ENCODE measurements at regions of chr12 and their contacts with region 1.

Region 1: GRCh38 chr12:124940549-124941527 is 26.4 kb upstream of the UBC start:
- DNase-seq: peak; percentile 62
- ATAC-seq: peak; percentile 60
- H3K4me3 Mint-ChIP-seq: no peak overlapping the region
- H3K27ac Mint-ChIP-seq: no peak overlapping the region
- H3K4me1 Mint-ChIP-seq: peaks cover 15% of the 10 kb centered on the region
- H3K27me3 Mint-ChIP-seq: no peaks in the 10 kb centered on the region
- CTCF ChIP-seq: no peak

Region 2: DNA sequence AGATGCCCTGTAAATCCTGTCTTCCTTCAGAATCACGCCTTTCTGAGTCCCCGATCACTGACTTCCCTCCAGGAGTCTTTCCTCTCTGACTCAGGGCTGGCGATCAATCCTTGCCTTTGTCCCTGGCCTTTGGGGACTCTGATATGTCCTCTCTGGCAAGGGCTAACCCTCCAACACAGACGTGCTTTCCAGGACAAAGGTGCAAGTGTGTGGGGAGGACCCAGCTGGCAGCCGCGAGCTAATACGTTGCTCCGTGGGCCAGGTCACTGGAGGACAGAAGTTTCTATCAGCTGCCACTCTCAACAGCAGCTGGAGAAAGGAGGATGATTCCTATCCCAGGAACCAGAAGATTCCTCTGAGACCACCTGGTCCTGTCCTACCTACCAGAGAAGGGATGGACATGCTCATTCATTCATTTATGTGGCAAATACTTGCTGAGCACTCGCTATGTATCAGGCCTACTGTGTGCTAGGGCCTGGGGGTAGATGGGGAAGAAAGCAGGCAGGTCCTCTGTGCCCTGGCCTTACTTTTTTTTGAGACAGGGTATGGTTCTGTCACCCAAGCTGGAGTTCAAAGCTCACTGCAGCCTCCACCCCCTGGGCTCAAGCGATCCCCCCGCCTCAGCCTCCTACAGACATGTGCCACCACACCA is 68.6 kb before region 1 on chr12:
- CTCF ChIA-PET with region 1: no interaction called
- POLR2A ChIA-PET with region 1: no interaction called
- intact Hi-C with region 1: no loop called
- DNase-seq: no peak
- ATAC-seq: no peak
- H3K4me3 Mint-ChIP-seq: no peak overlapping the region
- H3K27ac Mint-ChIP-seq: no peak overlapping the region
- H3K4me1 Mint-ChIP-seq: peaks cover 21% of the 10 kb centered on the region
- H3K27me3 Mint-ChIP-seq: no peaks in the 10 kb centered on the region
- CTCF ChIP-seq: no peak

Region 3: GRCh38 chr12:124884587-124885438 is 56.0 kb before region 1 on chr12:
- CTCF ChIA-PET with region 1: no interaction called
- POLR2A ChIA-PET with region 1: no interaction called
- intact Hi-C with region 1: no loop called
- DNase-seq: peak; percentile 60
- ATAC-seq: peak; percentile 95
- H3K4me3 Mint-ChIP-seq: peak overlapping the region; percentile 70
- H3K27ac Mint-ChIP-seq: peak overlapping the region; percentile 87
- H3K4me1 Mint-ChIP-seq: peaks cover 65% of the 10 kb centered on the region
- H3K27me3 Mint-ChIP-seq: no peaks in the 10 kb centered on the region
- CTCF ChIP-seq: no peak

Region 4: DNA sequence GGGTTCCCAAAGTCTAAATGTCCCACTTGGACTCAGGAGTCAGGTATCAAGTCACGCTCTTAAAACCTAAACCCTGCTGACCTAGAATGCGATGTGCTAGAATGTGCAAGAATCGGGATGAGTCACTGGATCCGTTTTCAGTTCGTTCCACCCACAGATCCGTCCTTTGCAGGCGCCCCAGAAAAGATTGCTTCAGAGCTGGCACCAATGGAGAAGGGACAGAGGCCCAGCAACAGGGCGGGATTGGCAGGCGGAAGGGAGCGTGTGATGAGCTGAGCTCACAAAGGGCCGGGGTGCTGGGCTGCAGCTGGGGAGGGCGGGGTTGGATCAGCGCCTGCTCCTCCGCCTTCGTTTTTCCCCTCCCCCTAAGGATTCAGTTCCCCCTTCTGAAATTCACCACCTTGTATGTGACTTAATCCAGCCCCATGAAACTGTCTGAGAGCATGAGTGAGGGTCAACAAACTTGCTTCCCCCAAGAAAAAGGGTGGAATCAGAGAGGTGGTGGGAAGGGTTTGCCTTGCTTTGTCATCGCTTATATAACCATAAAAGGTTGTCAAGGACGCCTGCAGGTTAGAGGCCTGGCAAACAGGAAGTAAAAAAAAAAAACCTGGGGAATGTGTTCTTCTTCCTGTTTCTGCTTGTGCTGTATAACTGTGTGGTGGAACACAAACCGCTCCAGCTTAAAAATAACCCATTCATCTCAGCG is 23.6 kb before region 1 on chr12:
- CTCF ChIA-PET with region 1: interaction called, 177 read pairs
- POLR2A ChIA-PET with region 1: interaction called, 590 read pairs
- intact Hi-C with region 1: loop called (anchors 1 kb)
- DNase-seq: peak; percentile 77
- ATAC-seq: peak; percentile 63
- H3K4me3 Mint-ChIP-seq: peak overlapping the region; percentile 100
- H3K27ac Mint-ChIP-seq: peak overlapping the region; percentile 100
- H3K4me1 Mint-ChIP-seq: peaks cover 91% of the 10 kb centered on the region
- H3K27me3 Mint-ChIP-seq: no peaks in the 10 kb centered on the region
- CTCF ChIP-seq: no peak

Region 5: GRCh38 chr12:124927201-124928094 is 13.4 kb before region 1 on chr12:
- CTCF ChIA-PET with region 1: interaction called, 177 read pairs
- POLR2A ChIA-PET with region 1: interaction called, 590 read pairs
- intact Hi-C with region 1: loop called (anchors 1 kb)
- DNase-seq: peak; percentile 91
- ATAC-seq: peak; percentile 84
- H3K4me3 Mint-ChIP-seq: peak overlapping the region; percentile 88
- H3K27ac Mint-ChIP-seq: peak overlapping the region; percentile 98
- H3K4me1 Mint-ChIP-seq: peaks cover 32% of the 10 kb centered on the region
- H3K27me3 Mint-ChIP-seq: peaks cover 6% of the 10 kb centered on the region
- CTCF ChIP-seq: no peak